Activated CD8-positive, alpha-beta memory T cell treated with anti-CD3 and anti-CD28 coated beads, Interleukin-2, amount 10 ng/mL, durations not matched to agents 7 days and 5 days (primary cell): ENCODE measurements at regions of chr19 and their contacts with region 1.

Region 1: GRCh38 chr19:43555185-43555770 is 20.0 kb downstream of the XRCC1 start:
- DNase-seq: peak; percentile 89
- ATAC-seq: peak; percentile 94
- H3K4me3 Mint-ChIP-seq: no peak overlapping the region
- H3K27ac Mint-ChIP-seq: peak overlapping the region; percentile 61
- H3K4me1 Mint-ChIP-seq: peaks cover 11% of the 10 kb centered on the region
- H3K27me3 Mint-ChIP-seq: no peaks in the 10 kb centered on the region

Region 2: DNA sequence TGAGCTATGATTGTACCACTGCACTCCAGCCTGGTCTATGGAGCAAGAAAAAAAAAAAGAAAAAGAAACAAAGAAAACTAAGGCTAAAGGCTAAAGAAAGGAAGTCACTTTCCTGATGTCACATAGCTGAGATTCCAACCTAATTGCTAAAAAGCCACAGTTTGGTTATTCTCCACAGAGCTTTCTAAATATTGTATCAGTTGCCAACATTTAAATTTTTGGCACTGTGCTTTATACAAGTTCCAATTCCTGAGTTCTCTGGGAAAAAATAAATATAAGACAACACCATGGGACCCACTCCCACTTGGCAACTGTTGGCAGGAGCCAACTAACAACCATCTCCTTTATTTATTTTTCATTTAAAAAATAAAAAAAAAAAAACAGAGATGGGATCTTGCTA is 78.7 kb before region 1 on chr19:
- CTCF ChIA-PET with region 1: no interaction called
- DNase-seq: no peak
- ATAC-seq: no peak
- H3K4me3 Mint-ChIP-seq: no peak overlapping the region
- H3K27ac Mint-ChIP-seq: no peak overlapping the region
- H3K4me1 Mint-ChIP-seq: peaks cover 7% of the 10 kb centered on the region
- H3K27me3 Mint-ChIP-seq: no peaks in the 10 kb centered on the region

Region 3: GRCh38 chr19:43507880-43508279 is 47.4 kb before region 1 on chr19:
- CTCF ChIA-PET with region 1: no interaction called
- DNase-seq: no peak
- ATAC-seq: no peak
- H3K4me3 Mint-ChIP-seq: no peak overlapping the region
- H3K27ac Mint-ChIP-seq: no peak overlapping the region
- H3K4me1 Mint-ChIP-seq: peaks cover 19% of the 10 kb centered on the region
- H3K27me3 Mint-ChIP-seq: no peaks in the 10 kb centered on the region

Region 4: GRCh38 chr19:43526884-43527859 is 28.1 kb before region 1 on chr19 and contains the start of gene ETHE1:
- CTCF ChIA-PET with region 1: interaction called, 74 read pairs
- DNase-seq: peak; percentile 88
- ATAC-seq: peak; percentile 96
- H3K4me3 Mint-ChIP-seq: peak within 1 kb of the TSS; percentile 89
- H3K27ac Mint-ChIP-seq: peak within 1 kb of the TSS; percentile 93
- H3K4me1 Mint-ChIP-seq: peaks cover 24% of the 10 kb centered on the region
- H3K27me3 Mint-ChIP-seq: no peaks in the 10 kb centered on the region
- total RNA-seq, gene ETHE1: 52.6 to 55.8 TPM

Region 5: GRCh38 chr19:43532962-43533545 is 22.2 kb before region 1 on chr19 and contains the start of gene ZNF575:
- CTCF ChIA-PET with region 1: interaction called, 74 read pairs
- DNase-seq: peak; percentile 93
- ATAC-seq: peak; percentile 67
- H3K4me3 Mint-ChIP-seq: peak within 1 kb of the TSS; percentile 94
- H3K27ac Mint-ChIP-seq: peak within 1 kb of the TSS; percentile 98
- H3K4me1 Mint-ChIP-seq: peaks cover 19% of the 10 kb centered on the region
- H3K27me3 Mint-ChIP-seq: no peaks in the 10 kb centered on the region
- total RNA-seq, gene ZNF575: 2.9 to 3.7 TPM

Region 6: GRCh38 chr19:43575156-43575950 is 20.1 kb after region 1 on chr19 and contains the starts of genes PINLYP and XRCC1:
- CTCF ChIA-PET with region 1: interaction called, 17 read pairs
- DNase-seq: peak; percentile 99
- ATAC-seq: peak; percentile 97
- H3K4me3 Mint-ChIP-seq: peak within 1 kb of the TSS; percentile 95
- H3K27ac Mint-ChIP-seq: peak within 1 kb of the TSS; percentile 92
- H3K4me1 Mint-ChIP-seq: peaks cover 45% of the 10 kb centered on the region
- H3K27me3 Mint-ChIP-seq: no peaks in the 10 kb centered on the region
- total RNA-seq, gene PINLYP: 16.8 to 19.7 TPM
- total RNA-seq, gene XRCC1: 47.7 to 50.6 TPM

Region 7: DNA sequence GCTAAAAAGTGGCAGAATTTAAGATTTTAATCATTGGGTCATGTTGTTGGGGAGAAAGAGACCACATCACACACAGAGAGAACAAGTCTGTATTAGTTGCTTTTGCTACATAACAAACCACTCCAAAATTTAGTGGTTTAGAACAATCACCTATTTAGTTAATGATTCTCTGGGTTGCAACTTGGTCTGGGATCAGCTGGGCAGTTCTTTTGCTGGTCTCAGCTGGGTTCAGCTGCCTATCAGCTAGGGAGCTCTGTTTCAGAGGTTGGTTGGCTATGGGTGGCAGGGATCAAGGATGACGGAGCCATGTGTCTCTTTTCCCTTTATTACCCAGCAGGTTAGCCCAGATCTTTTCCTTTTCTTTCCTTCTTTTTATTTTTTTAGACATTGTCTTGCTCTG is 29.2 kb after region 1 on chr19:
- CTCF ChIA-PET with region 1: interaction called, 20 read pairs
- DNase-seq: no peak
- ATAC-seq: no peak
- H3K4me3 Mint-ChIP-seq: no peak overlapping the region
- H3K27ac Mint-ChIP-seq: peak overlapping the region; percentile 83
- H3K4me1 Mint-ChIP-seq: peaks cover 45% of the 10 kb centered on the region
- H3K27me3 Mint-ChIP-seq: no peaks in the 10 kb centered on the region

Region 8: GRCh38 chr19:43589678-43590077 is 34.4 kb after region 1 on chr19:
- CTCF ChIA-PET with region 1: interaction called, 173 read pairs
- DNase-seq: no peak
- ATAC-seq: no peak
- H3K4me3 Mint-ChIP-seq: no peak overlapping the region
- H3K27ac Mint-ChIP-seq: peak overlapping the region; percentile 72
- H3K4me1 Mint-ChIP-seq: peaks cover 26% of the 10 kb centered on the region
- H3K27me3 Mint-ChIP-seq: no peaks in the 10 kb centered on the region

Region 9: DNA sequence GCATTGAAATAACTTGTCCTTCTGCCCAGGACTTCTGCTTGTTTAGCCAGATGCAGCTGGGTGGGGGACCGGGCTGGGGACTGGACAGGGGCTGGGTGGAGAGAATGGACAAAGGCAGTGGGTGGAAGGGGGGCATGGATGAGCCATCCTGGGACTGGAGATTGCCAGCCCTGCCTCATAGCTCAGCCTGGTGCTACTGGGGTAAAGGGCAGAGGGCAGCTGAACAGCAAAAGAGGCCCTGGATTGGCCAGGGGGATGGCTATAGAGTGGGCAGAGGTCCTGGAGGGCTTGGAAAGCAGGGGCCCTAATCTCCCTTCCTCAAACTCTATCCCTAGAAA is 132.4 kb after region 1 on chr19:
- CTCF ChIA-PET with region 1: no interaction called
- DNase-seq: no peak
- ATAC-seq: no peak
- H3K4me3 Mint-ChIP-seq: no peak overlapping the region
- H3K27ac Mint-ChIP-seq: no peak overlapping the region
- H3K4me1 Mint-ChIP-seq: no peaks in the 10 kb centered on the region
- H3K27me3 Mint-ChIP-seq: no peaks in the 10 kb centered on the region

Region 10: GRCh38 chr19:43765109-43765876 is 210.0 kb after region 1 on chr19:
- CTCF ChIA-PET with region 1: no interaction called
- DNase-seq: peak; percentile 96
- ATAC-seq: peak; percentile 88
- H3K4me3 Mint-ChIP-seq: peak overlapping the region; percentile 49
- H3K27ac Mint-ChIP-seq: peak overlapping the region; percentile 94
- H3K4me1 Mint-ChIP-seq: peaks cover 55% of the 10 kb centered on the region
- H3K27me3 Mint-ChIP-seq: no peaks in the 10 kb centered on the region